ENCODE measurements at regions of chr2 and their contacts with region 1.

Region 1: GRCh38 chr2:171771463-171771862 is 84.2 kb downstream of the DYNC1I2 start:
- DNase-seq: no peak
- ATAC-seq: no peak
- H3K4me3 ChIP-seq: no peak overlapping the region
- H3K27ac ChIP-seq: no peak overlapping the region
- H3K4me1 ChIP-seq: no peaks in the 10 kb centered on the region
- H3K27me3 ChIP-seq: no peaks in the 10 kb centered on the region
- CTCF ChIP-seq: no peak
- POLR2A ChIP-seq: no peak
- RAD21 ChIP-seq: no peak

Region 2: GRCh38 chr2:169887120-169887519 is 1884.3 kb before region 1 on chr2:
- CTCF ChIA-PET with region 1: no interaction called
- POLR2A ChIA-PET with region 1: interaction called, 14 read pairs
- dilution Hi-C with region 1: no loop called
- in situ Hi-C with region 1: no loop called
- intact Hi-C with region 1: no loop called
- DNase-seq: no peak
- ATAC-seq: no peak
- H3K4me3 ChIP-seq: no peak overlapping the region
- H3K27ac ChIP-seq: no peak overlapping the region
- H3K4me1 ChIP-seq: no peaks in the 10 kb centered on the region; the same call in 1 of the 2 replicates
- H3K27me3 ChIP-seq: no peaks in the 10 kb centered on the region
- CTCF ChIP-seq: no peak
- POLR2A ChIP-seq: no peak
- RAD21 ChIP-seq: no peak

Region 3: DNA sequence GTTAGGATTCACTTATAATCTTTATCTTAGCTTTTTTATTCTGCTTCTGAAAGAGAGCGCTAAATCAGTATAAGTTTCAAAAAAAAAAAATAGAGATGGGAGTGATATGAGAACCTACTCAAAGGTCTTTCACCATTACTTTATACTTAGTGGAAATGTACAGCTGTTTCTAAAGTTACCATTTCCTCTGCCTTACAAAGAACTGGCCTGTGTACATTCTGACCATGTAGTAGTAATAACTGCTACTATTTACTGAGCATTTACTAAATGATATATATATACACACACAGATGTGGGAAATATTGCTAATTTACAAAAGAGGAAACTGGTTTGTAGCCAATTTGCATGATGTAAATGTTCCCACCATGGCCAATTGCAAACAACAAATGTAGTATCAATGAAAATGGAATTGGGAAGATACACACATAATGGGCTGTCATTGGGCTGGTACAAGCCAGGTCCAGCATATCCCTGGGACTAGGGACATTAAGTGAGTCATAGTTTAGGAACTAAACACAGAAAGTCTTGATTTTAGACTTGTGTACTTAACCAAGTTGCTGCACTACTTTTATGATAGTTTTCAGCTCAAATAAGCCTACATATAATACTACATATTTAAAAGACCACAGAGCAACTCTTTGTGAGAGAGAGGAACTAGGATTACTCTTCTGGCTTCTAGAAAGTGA is 17.1 kb before region 1 on chr2:
- CTCF ChIA-PET with region 1: no interaction called
- POLR2A ChIA-PET with region 1: interaction called, 12 read pairs
- dilution Hi-C with region 1: no loop called
- in situ Hi-C with region 1: no loop called
- intact Hi-C with region 1: no loop called
- DNase-seq: peak; percentile 19
- ATAC-seq: peak; percentile 82
- H3K4me3 ChIP-seq: no peak overlapping the region
- H3K27ac ChIP-seq: no peak overlapping the region
- H3K4me1 ChIP-seq: no peaks in the 10 kb centered on the region
- H3K27me3 ChIP-seq: no peaks in the 10 kb centered on the region
- CTCF ChIP-seq: no peak
- POLR2A ChIP-seq: no peak
- RAD21 ChIP-seq: no peak